ENCODE measurements at regions of chr10 and their contacts with region 1.

Region 1: DNA sequence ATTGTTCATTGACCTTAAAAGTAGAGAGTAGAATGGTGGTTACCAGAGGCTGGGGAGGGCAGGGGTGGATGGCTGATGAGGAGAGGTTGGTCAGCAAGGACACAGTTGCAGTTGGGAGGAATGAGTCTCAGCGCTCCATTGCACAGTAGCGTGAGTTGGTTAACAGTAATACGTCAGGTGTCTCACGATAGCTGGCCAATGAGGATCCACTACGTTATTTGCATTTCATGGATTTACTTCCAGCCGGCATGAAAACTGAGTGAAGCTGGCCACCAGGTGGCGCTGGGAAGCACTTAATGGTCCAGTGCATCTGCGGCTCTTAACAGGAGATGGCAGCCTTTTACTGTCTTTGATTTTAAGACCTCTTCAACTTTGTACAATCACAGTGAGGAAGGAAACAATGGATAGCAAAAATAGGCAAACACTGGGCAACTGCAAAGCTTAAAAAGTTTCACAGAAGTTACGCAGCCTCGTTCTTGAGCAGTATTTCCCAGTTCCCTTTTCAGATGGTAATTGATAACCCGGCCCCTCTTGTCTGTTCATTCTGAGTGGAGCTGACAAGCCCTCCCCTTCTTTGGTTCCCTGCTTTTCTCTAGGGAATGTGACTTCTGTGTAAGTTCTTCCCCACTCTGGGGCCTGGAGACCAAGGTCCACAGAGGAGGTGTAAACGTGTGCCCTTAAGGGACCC is 23.7 kb downstream of the AKR1E2 start:
- DNase-seq: peak; percentile 75 to 87 (median 80)
- H3K4me3 ChIP-seq: no peak overlapping the region
- H3K4me3 Mint-ChIP-seq: peak overlapping the region in 4 of 8 donors; percentile 7 to 46 (median 26)
- H3K27ac ChIP-seq: no peak overlapping the region
- H3K27ac Mint-ChIP-seq: peak overlapping the region in 5 of 7 donors; percentile 10 to 84 (median 63)
- H3K4me1 ChIP-seq: peaks cover 4% of the 10 kb centered on the region
- H3K4me1 Mint-ChIP-seq: peaks cover 6 to 9% (median 8%) of the 10 kb centered on the region in 4 donors
- H3K27me3 ChIP-seq: no peaks in the 10 kb centered on the region
- H3K27me3 Mint-ChIP-seq: peaks cover 0 to 2% of the 10 kb centered on the region in 2 donors

Region 2: GRCh38 chr10:4813023-4813422 is 36.7 kb before region 1 on chr10:
- CTCF ChIA-PET with region 1: interaction called, 55 read pairs
- POLR2A ChIA-PET with region 1: interaction called, 3 read pairs
- intact Hi-C with region 1: no loop called
- DNase-seq: no peak
- H3K4me3 ChIP-seq: no peak overlapping the region
- H3K4me3 Mint-ChIP-seq: no peak overlapping the region
- H3K27ac ChIP-seq: no peak overlapping the region
- H3K27ac Mint-ChIP-seq: no peak overlapping the region
- H3K4me1 ChIP-seq: peaks cover 6% of the 10 kb centered on the region
- H3K4me1 Mint-ChIP-seq: no peaks in the 10 kb centered on the region
- H3K27me3 ChIP-seq: no peaks in the 10 kb centered on the region
- H3K27me3 Mint-ChIP-seq: peaks cover 11 to 13% of the 10 kb centered on the region in 2 donors

Region 3: GRCh38 chr10:4839401-4839800 is 10.3 kb before region 1 on chr10:
- CTCF ChIA-PET with region 1: interaction called, 112 read pairs
- POLR2A ChIA-PET with region 1: interaction called, 5 read pairs
- intact Hi-C with region 1: loop called (anchors 1 kb)
- DNase-seq: no peak
- H3K4me3 ChIP-seq: no peak overlapping the region
- H3K4me3 Mint-ChIP-seq: no peak overlapping the region
- H3K27ac ChIP-seq: no peak overlapping the region
- H3K27ac Mint-ChIP-seq: peak overlapping the region in 3 of 7 donors; percentile 0 to 71 (median 32)
- H3K4me1 ChIP-seq: peaks cover 35% of the 10 kb centered on the region
- H3K4me1 Mint-ChIP-seq: peaks cover 19 to 31% (median 25%) of the 10 kb centered on the region in 4 donors
- H3K27me3 ChIP-seq: no peaks in the 10 kb centered on the region
- H3K27me3 Mint-ChIP-seq: no peaks in the 10 kb centered on the region

Region 4: GRCh38 chr10:4909118-4909517 is 59.4 kb after region 1 on chr10:
- CTCF ChIA-PET with region 1: no interaction called
- POLR2A ChIA-PET with region 1: no interaction called
- intact Hi-C with region 1: no loop called
- DNase-seq: no peak
- H3K4me3 ChIP-seq: no peak overlapping the region
- H3K4me3 Mint-ChIP-seq: no peak overlapping the region
- H3K27ac ChIP-seq: no peak overlapping the region
- H3K27ac Mint-ChIP-seq: peak overlapping the region in 1 of 7 donors; percentile 50
- H3K4me1 ChIP-seq: no peaks in the 10 kb centered on the region
- H3K4me1 Mint-ChIP-seq: no peaks in the 10 kb centered on the region
- H3K27me3 ChIP-seq: no peaks in the 10 kb centered on the region
- H3K27me3 Mint-ChIP-seq: peaks cover 0 to 1% of the 10 kb centered on the region in 2 donors

Region 5: GRCh38 chr10:5094265-5095205 is 244.8 kb after region 1 on chr10 and contains the start of gene AKR1C3:
- CTCF ChIA-PET with region 1: interaction called, 4 read pairs
- POLR2A ChIA-PET with region 1: no interaction called
- intact Hi-C with region 1: loop called (anchors 10 kb)
- DNase-seq: peak in 4 of 5 donors; percentile 13 to 41 (median 23)
- H3K4me3 ChIP-seq: peak within 1 kb of the TSS; percentile 19 to 74
- H3K4me3 Mint-ChIP-seq: peak within 1 kb of the TSS; percentile 80 to 91 (median 86)
- H3K27ac ChIP-seq: peak within 1 kb of the TSS; percentile 22
- H3K27ac Mint-ChIP-seq: peak within 1 kb of the TSS in 6 of 7 donors; percentile 19 to 74 (median 56)
- H3K4me1 ChIP-seq: peaks cover 9% of the 10 kb centered on the region
- H3K4me1 Mint-ChIP-seq: peaks cover 6 to 10% (median 7%) of the 10 kb centered on the region in 4 donors
- H3K27me3 ChIP-seq: no peaks in the 10 kb centered on the region
- H3K27me3 Mint-ChIP-seq: peaks cover 3 to 11% of the 10 kb centered on the region in 2 donors
- total RNA-seq, gene AKR1C3: 3.4 to 4.0 TPM

Region 6: DNA sequence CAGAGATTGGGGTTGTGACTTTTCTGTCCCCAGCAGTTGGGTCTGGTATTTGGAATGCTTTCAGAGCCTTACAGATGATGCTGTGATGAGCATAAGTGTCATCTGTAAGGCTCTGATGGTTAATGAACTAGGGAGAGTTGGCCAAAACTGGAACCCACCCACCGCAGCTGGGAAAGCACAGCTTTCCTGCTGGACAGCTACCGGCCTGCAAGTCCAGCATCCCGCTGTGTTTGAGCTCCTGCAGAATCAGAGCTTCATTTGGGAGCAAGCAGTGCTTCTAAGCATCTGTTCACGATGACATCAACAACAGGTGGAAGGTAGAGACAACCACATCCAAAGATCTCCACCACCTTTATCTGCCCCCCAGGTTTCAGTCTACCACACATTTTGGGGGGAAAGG is 526.8 kb after region 1 on chr10:
- CTCF ChIA-PET with region 1: interaction called, 10 read pairs
- POLR2A ChIA-PET with region 1: no interaction called
- intact Hi-C with region 1: no loop called
- DNase-seq: no peak
- H3K4me3 ChIP-seq: no peak overlapping the region
- H3K4me3 Mint-ChIP-seq: no peak overlapping the region
- H3K27ac ChIP-seq: no peak overlapping the region
- H3K27ac Mint-ChIP-seq: no peak overlapping the region
- H3K4me1 ChIP-seq: no peaks in the 10 kb centered on the region
- H3K4me1 Mint-ChIP-seq: no peaks in the 10 kb centered on the region
- H3K27me3 ChIP-seq: no peaks in the 10 kb centered on the region
- H3K27me3 Mint-ChIP-seq: peaks cover 0 to 5% of the 10 kb centered on the region in 2 donors

Region 7: GRCh38 chr10:5623081-5623748 is 773.5 kb after region 1 on chr10:
- CTCF ChIA-PET with region 1: interaction called, 23 read pairs
- POLR2A ChIA-PET with region 1: no interaction called
- intact Hi-C with region 1: loop called (anchors 1 kb)
- DNase-seq: peak; percentile 68 to 75 (median 70)
- H3K4me3 ChIP-seq: no peak overlapping the region
- H3K4me3 Mint-ChIP-seq: no peak overlapping the region
- H3K27ac ChIP-seq: no peak overlapping the region
- H3K27ac Mint-ChIP-seq: no peak overlapping the region
- H3K4me1 ChIP-seq: no peaks in the 10 kb centered on the region
- H3K4me1 Mint-ChIP-seq: peaks cover 0 to 7% (median 3%) of the 10 kb centered on the region in 4 donors
- H3K27me3 ChIP-seq: no peaks in the 10 kb centered on the region
- H3K27me3 Mint-ChIP-seq: no peaks in the 10 kb centered on the region

Measured in CD4-positive, alpha-beta memory T cell (primary cell).